GM10248 (cell line): ENCODE measurements at regions of chr19 and their contacts with region 1.

Region 1: DNA sequence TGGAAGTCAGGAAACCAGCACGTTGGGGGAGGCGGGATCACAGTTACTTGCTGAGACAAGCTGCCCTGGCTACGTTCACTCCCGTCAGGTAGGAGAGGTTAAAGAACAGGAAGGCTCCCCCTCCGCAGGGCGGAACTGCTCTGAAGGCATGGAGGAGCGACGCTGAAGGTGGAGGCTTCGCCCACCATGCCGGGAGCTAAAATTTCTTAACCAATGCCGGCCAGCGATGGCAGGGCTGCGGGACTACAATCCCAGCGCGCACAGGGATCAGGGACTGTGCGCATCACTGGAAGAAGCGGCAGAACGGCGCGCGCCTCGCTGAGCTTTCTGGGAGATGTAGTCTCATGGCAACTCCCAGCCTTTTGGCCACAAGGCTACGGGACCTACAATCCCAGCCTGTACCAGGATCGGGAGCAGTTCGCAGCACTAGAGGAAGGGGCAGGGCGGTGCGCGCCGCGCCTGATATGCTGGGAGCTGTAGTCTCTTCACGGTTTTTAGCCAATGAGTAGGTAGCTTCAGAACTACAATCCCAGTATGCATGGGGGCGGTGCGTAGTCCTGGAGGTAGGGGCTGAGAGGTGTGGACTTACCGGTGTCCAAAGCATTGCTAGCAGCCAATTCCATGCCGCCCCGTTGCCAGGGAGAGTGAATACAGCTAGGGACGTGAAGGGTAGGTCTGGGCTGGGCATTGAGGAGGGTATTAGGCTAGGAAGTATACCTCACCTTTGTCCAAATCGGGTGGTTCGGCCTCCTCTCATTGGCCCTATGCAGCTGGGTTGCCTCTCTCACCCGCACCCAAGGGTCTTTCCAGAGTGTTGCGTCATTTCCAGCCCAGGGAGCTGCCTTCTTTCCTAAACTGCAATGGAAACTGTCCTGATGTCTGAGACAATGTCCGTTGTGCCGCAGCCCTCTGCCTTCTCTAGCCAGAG is 12.8 kb upstream of the ZNF682 start:
- DNase-seq: peak; percentile 61
- CTCF ChIP-seq: no peak

Region 2: GRCh38 chr19:20039203-20039723 is 12.8 kb before region 1 on chr19 and contains the start of gene ZNF682:
- CTCF ChIA-PET with region 1: interaction called, 10 read pairs
- POLR2A ChIA-PET with region 1: interaction called, 4 read pairs
- DNase-seq: peak; percentile 91
- CTCF ChIP-seq: no peak

Region 3: DNA sequence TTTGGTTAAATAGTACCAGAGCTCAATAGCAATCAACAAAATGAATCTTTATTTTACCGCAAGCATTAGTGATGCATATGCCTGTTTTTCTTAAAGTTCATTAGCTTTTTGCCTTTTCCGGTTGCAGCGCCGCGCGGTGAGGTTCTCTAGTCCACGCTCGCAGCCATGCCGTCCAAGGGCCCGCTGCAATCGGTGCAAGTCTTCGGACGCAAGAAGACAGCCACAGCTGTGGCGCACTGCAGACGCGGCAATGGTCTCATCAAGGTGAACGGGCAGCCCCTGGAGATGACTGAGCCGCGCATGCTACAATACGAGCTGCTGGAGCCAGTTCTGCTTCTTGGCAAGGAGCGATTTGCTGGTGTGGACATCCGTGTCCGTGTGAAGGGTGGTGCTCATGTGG is 72.8 kb after region 1 on chr19:
- CTCF ChIA-PET with region 1: no interaction called
- POLR2A ChIA-PET with region 1: no interaction called
- DNase-seq: no peak
- CTCF ChIP-seq: no peak